Activated T-helper 1 cell treated with anti-CD3 and anti-CD28 coated beads, Interleukin-12 subunit alpha, Interleukin-12 subunit beta, Interleukin-2, Interleukin-4 antibody, amounts not matched to agents 30 ng/mL and 10 ng/mL and 1 ng/mL, durations not matched to agents 14 hours and 24 hours and 36 hours (primary cell): ENCODE measurements at regions of chr11 and their contacts with region 1.

Region 1: GRCh38 chr11:67507864-67508485 is at the start of gene CDK2AP2:
- DNase-seq: peak; percentile 97
- H3K4me3 Mint-ChIP-seq: peak within 1 kb of the TSS; percentile 92
- H3K27ac Mint-ChIP-seq: peak within 1 kb of the TSS; percentile 93
- H3K4me1 Mint-ChIP-seq: peaks cover 36% of the 10 kb centered on the region
- H3K27me3 Mint-ChIP-seq: no peaks in the 10 kb centered on the region
- total RNA-seq, gene CDK2AP2: 107 and 115 TPM in 2 replicates

Region 2: DNA sequence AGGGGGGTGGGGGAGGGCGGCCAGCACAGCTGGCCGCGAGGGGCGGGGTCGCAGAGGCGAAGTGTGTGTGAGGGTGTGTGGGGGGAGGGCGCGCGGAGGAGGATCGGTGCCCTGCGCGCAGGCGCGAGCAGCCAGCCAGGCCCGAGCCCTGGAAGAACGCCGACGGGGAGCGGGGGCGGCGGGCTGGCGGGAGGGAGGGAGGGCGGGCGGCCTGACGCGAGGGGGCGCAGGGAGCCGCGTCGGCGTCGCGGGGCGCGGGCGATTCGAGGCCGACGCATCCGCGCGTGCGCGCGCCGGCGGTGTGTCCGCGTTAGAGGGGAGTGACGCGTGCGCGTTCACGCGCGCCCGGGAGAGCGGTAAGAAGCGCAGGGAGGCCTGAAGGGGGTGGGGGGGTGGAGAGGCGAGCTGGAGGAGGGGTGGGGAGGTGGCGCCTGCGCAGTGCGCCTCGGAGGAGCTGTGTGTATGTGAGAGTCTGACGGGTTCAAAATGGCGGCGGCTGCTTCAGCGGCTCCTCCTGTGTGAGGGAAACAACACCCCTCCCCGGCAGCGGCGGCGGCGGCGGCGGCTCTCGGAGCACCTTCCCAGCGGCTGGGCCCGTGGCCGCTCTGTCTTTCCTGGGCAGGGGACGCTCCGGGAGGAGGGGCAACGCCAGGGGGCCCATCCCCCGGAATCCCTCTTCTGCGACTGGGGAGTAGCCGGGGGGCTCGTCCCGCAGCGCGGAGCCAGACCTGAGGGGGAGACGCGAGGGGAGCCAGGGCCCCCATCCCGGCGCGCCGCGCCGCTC is 389.0 kb before region 1 on chr11 and contains the start of gene KDM2A:
- intact Hi-C with region 1: loop called (anchors 1 kb)
- DNase-seq: peak; percentile 95
- H3K4me3 Mint-ChIP-seq: peak within 1 kb of the TSS; percentile 99
- H3K27ac Mint-ChIP-seq: peak within 1 kb of the TSS; percentile 92
- H3K4me1 Mint-ChIP-seq: peaks cover 23% of the 10 kb centered on the region
- H3K27me3 Mint-ChIP-seq: peaks cover 12% of the 10 kb centered on the region
- total RNA-seq, gene KDM2A: 114 and 119 TPM in 2 replicates

Region 3: DNA sequence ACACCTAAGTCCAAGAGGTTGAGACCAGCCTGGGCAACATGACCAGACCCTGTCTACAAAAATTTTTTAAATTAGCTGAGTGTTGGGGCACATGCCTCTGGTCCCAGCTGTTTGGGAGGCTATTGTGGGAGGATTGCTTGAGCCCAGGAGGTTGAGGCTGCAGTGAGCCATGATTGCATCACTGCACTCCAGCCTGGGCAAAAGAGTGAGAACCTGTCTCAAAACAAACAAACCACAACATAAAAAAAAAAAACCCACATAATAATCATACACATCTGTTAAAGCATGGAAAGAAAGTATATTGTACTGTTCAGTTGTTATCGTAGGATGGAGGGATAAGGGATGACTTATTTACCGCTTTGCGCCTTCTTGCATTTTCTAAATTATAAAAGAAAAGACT is 277.6 kb before region 1 on chr11:
- intact Hi-C with region 1: no loop called
- DNase-seq: no peak
- H3K4me3 Mint-ChIP-seq: no peak overlapping the region
- H3K27ac Mint-ChIP-seq: peak overlapping the region; percentile 68
- H3K4me1 Mint-ChIP-seq: peaks cover 24% of the 10 kb centered on the region
- H3K27me3 Mint-ChIP-seq: no peaks in the 10 kb centered on the region

Region 4: DNA sequence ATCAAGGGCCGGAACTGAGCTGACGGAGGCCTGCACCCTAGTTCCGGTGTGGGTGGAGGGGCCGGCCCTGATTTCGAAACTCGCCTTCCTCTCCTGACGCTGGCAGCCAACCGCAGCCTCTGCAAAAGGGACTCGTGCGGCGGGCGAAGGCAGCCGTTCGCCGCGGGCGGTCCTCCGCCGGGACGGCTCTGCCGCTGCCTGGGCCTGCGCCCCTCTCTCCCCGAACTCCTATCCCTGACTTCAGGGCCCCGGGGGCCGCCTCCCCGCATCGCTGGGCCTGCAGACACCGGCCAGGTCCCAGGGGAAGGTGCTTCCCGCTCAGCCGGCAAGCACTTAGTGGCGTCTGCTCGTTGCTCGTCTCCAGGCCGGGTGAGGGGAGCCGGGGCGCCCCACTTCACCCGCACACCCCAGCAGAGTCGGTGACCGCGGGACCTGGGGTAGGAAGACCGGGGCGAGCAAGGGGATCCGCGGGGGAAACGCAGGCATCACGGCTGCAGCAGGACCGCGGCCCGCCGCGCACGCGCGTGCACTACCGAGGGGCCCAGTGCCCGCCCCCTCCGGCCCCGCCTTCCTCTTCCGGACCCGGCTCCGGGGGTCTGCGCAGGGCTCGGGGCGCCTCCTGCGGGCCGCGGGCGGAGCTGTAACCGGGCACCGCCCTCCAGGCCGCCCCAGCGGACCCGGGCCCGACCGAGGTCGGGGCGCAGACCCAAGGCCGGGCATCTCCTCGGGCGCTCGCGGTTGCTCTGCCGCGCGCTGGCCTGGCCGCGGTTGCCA is 219.3 kb before region 1 on chr11:
- intact Hi-C with region 1: loop called (anchors 5 kb)
- DNase-seq: peak; percentile 88
- H3K4me3 Mint-ChIP-seq: peak overlapping the region; percentile 77
- H3K27ac Mint-ChIP-seq: peak overlapping the region; percentile 97
- H3K4me1 Mint-ChIP-seq: peaks cover 36% of the 10 kb centered on the region
- H3K27me3 Mint-ChIP-seq: peaks cover 2% of the 10 kb centered on the region

Region 5: GRCh38 chr11:67401495-67402191 is 106.3 kb before region 1 on chr11 and contains the start of gene PPP1CA:
- intact Hi-C with region 1: loop called (anchors 1 kb)
- DNase-seq: peak; percentile 87
- H3K4me3 Mint-ChIP-seq: peak within 1 kb of the TSS; percentile 92
- H3K27ac Mint-ChIP-seq: peak within 1 kb of the TSS; percentile 86
- H3K4me1 Mint-ChIP-seq: peaks cover 50% of the 10 kb centered on the region
- H3K27me3 Mint-ChIP-seq: no peaks in the 10 kb centered on the region
- total RNA-seq, gene PPP1CA: 260 and 263 TPM in 2 replicates

Region 6: DNA sequence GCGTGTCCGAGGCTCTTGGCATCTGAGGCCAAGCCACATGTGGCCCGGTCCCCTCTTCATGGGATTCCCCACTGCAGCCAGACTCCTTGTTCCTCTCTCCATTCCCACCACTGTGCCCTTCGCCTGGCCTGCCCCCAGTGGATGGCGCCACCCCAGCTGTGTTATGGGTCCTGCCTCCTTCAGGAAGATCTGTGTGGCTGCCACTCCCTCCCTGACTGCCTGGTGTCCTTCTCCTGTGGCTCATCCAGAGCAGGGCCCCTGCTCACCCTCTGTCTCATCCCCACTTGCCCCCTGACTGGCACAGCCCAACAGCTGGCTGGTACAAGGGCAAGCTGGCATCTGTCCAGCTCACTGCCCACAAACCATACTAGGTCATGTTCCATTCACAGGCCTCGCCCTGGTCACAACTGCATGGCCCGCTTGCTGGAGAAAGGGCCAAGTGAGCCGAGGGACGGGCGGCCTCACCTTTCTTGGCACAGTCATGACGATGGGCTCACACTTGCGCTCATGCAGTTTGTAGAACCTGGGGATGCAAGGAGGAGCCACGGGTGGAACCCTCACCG is 68.6 kb before region 1 on chr11:
- intact Hi-C with region 1: loop called (anchors 1 kb)
- DNase-seq: peak; percentile 24
- H3K4me3 Mint-ChIP-seq: peak overlapping the region; percentile 90
- H3K27ac Mint-ChIP-seq: peak overlapping the region; percentile 97
- H3K4me1 Mint-ChIP-seq: peaks cover 33% of the 10 kb centered on the region
- H3K27me3 Mint-ChIP-seq: no peaks in the 10 kb centered on the region

Region 7: GRCh38 chr11:67492801-67493547 is 15.0 kb before region 1 on chr11:
- intact Hi-C with region 1: no loop called
- DNase-seq: no peak
- H3K4me3 Mint-ChIP-seq: no peak overlapping the region
- H3K27ac Mint-ChIP-seq: no peak overlapping the region
- H3K4me1 Mint-ChIP-seq: peaks cover 16% of the 10 kb centered on the region
- H3K27me3 Mint-ChIP-seq: no peaks in the 10 kb centered on the region

Region 8: GRCh38 chr11:67606492-67607201 is 98.7 kb after region 1 on chr11 and contains the start of gene NDUFV1:
- intact Hi-C with region 1: loop called (anchors 1 kb)
- DNase-seq: peak; percentile 97
- H3K4me3 Mint-ChIP-seq: peak within 1 kb of the TSS; percentile 94
- H3K27ac Mint-ChIP-seq: peak within 1 kb of the TSS; percentile 97
- H3K4me1 Mint-ChIP-seq: peaks cover 26% of the 10 kb centered on the region
- H3K27me3 Mint-ChIP-seq: peaks cover 7% of the 10 kb centered on the region
- total RNA-seq, gene NDUFV1: 289 and 303 TPM in 2 replicates

Region 9: GRCh38 chr11:68459886-68460740 is 952.1 kb after region 1 on chr11:
- intact Hi-C with region 1: loop called (anchors 2 kb)
- DNase-seq: peak; percentile 90
- H3K4me3 Mint-ChIP-seq: peak overlapping the region; percentile 86
- H3K27ac Mint-ChIP-seq: peak overlapping the region; percentile 91
- H3K4me1 Mint-ChIP-seq: peaks cover 29% of the 10 kb centered on the region
- H3K27me3 Mint-ChIP-seq: peaks cover 3% of the 10 kb centered on the region